RWPE1 (cell line): ENCODE measurements at regions of chr10 and their contacts with region 1.

Region 1: GRCh38 chr10:23884670-23885069 is 324.3 kb upstream of the KIAA1217 start:
- DNase-seq: no peak
- H3K27ac ChIP-seq: no peak overlapping the region
- CTCF ChIP-seq: no peak

Region 2: DNA sequence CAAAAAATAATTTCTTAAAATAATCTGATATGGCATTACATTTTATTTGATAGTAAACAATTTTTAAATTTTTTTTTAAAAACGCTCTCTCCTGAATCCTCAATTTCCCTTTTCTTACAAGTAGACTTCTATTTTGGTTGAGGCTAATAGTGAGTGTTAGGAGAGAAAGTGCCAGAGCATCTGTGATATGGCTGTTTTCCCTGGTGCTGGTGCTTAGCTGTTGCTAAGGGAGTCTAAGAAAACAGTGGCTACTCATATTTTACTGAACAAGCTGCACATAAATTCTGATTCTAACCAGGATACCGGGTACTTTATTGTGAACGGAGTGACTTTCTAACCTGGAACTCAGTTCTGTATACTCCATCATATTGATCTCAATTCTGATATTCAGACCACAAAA is 13.2 kb after region 1 on chr10:
- CTCF ChIA-PET with region 1: no interaction called
- POLR2A ChIA-PET with region 1: no interaction called
- DNase-seq: no peak
- H3K27ac ChIP-seq: no peak overlapping the region
- CTCF ChIP-seq: no peak

Region 3: GRCh38 chr10:24287559-24288195 is 403.0 kb after region 1 on chr10:
- CTCF ChIA-PET with region 1: interaction called, 10 read pairs
- POLR2A ChIA-PET with region 1: no interaction called
- DNase-seq: no peak
- H3K27ac ChIP-seq: no peak overlapping the region
- CTCF ChIP-seq: no peak